Brain microvascular endothelial cell (primary cell): ENCODE measurements at regions of chr3 and their contacts with region 1.

Region 1: GRCh38 chr3:150227839-150228238 is 180.3 kb upstream of the TSC22D2 start:
- DNase-seq: peak; percentile 54
- H3K4me3 ChIP-seq: no peak overlapping the region
- H3K27ac ChIP-seq: no peak overlapping the region
- H3K27me3 ChIP-seq: no peaks in the 10 kb centered on the region
- CTCF ChIP-seq: peak; percentile 92

Region 2: DNA sequence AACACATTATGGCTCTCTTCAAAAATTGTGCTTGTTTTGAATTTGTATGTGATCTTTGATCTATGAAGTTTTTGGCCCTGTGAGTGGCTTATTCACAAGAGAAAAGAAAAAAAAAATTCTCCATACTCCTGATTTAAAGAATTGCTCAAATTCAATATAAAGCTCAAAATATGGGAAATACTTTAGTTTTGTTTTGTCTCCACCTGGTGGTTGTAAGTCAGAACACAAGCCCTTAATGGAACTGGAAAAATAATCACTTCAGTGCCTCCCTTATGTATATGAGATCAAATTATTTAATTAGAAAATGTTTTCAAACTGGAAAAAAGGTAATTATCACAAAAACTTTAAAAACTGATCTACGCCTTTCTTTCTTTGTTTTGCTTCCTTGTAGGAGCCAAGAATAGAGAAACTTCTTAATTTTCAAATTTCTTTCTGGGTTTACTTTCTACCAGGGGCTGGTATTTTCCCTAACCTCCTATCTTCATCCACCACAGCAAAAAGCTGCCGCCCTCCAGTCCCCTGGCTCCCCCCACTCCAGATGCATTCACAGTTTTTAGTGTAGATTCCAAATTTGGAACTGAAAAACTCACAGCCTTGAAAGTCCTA is 267.8 kb after region 1 on chr3:
- in situ Hi-C with region 1: loop called (anchors 25 kb)
- DNase-seq: peak; percentile 43
- H3K4me3 ChIP-seq: no peak overlapping the region
- H3K27ac ChIP-seq: no peak overlapping the region
- H3K27me3 ChIP-seq: no peaks in the 10 kb centered on the region
- CTCF ChIP-seq: peak; percentile 51

Region 3: GRCh38 chr3:150798122-150798626 is 570.3 kb after region 1 on chr3:
- in situ Hi-C with region 1: no loop called
- DNase-seq: no peak
- H3K4me3 ChIP-seq: no peak overlapping the region
- H3K27ac ChIP-seq: no peak overlapping the region
- H3K27me3 ChIP-seq: no peaks in the 10 kb centered on the region
- CTCF ChIP-seq: no peak